AG04450 (cell line): ENCODE measurements at regions of chrX and their contacts with region 1.

Region 1: DNA sequence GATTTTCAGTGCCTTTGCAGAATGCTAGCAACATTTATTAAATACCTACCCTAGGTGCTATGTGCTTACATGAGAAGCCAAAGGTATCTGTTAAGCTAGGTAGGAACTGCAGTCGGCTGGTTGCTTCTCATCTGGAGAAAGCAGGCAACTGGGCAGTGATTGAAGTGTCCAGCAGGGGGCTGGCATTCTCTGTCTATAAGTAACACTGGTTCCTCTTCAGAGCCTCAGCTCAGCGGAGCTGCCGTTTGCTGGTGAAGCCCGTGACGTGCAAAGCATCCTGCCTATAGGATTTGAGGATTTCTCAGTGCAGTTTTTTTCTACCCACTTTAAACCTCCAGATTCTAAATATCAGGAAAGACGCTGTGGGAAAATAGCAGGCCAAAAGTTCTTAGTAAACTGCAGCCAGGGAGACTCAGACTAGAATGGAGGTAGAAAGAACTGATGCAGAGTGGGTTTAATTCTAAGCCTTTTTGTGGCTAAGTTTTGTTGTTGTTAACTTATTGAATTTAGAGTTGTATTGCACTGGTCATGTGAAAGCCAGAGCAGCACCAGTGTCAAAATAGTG is at the start of gene GRPR:
- DNase-seq: peak; percentile 74
- H3K4me3 ChIP-seq: no peak within 1 kb of the TSS
- H3K27ac ChIP-seq: no peak within 1 kb of the TSS
- H3K27me3 ChIP-seq: no peaks in the 10 kb centered on the region
- CTCF ChIP-seq: peak; percentile 70
- polyA plus RNA-seq, gene GRPR: 1.7 and 2.0 TPM in 2 replicates

Region 2: GRCh38 chrX:16445166-16445752 is 322.0 kb after region 1 on chrX:
- CTCF ChIA-PET with region 1: interaction called, 11 read pairs
- POLR2A ChIA-PET with region 1: no interaction called
- DNase-seq: no peak
- H3K4me3 ChIP-seq: no peak overlapping the region
- H3K27ac ChIP-seq: no peak overlapping the region
- H3K27me3 ChIP-seq: no peaks in the 10 kb centered on the region
- CTCF ChIP-seq: peak; percentile 60